Naive thymus-derived CD4-positive, alpha-beta T cell (primary cell): ENCODE measurements at regions of chr1 and their contacts with region 1.

Region 1: DNA sequence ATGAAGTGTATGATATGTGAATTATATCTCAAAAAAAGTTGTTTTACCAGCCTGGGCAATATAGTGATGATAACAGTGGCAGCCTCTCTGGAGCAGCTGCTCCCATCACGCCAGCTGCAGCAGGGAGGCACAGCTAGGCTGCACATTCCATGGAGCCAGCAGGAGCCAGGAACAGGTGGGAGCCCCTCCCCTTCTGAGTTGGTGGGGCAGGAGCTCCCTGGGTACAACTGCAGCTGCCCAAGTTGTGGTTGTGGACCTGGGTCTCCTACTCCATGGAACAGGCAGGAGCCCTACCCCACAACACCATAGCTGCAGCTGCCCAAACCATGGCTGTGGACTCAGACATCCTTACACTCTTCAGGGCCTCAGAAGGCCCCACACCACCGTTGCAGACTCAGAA is 21.7 kb upstream of the FNBP1L start:
- DNase-seq: no peak
- ATAC-seq: no peak
- H3K4me3 ChIP-seq: no peak overlapping the region
- H3K4me3 Mint-ChIP-seq: no peak overlapping the region
- H3K27ac ChIP-seq: no peak overlapping the region
- H3K27ac Mint-ChIP-seq: no peak overlapping the region
- H3K4me1 ChIP-seq: no peaks in the 10 kb centered on the region
- H3K4me1 Mint-ChIP-seq: no peaks in the 10 kb centered on the region
- H3K27me3 ChIP-seq: no peaks in the 10 kb centered on the region
- H3K27me3 Mint-ChIP-seq: peaks cover 0 to 23% (median 6%) of the 10 kb centered on the region in 5 donors

Region 2: GRCh38 chr1:93358293-93358692 is 67.9 kb before region 1 on chr1:
- CTCF ChIA-PET with region 1: no interaction called
- POLR2A ChIA-PET with region 1: no interaction called
- intact Hi-C with region 1: loop called in 1 of 2 experiments (anchors 5 kb)
- DNase-seq: no peak
- ATAC-seq: no peak
- H3K4me3 ChIP-seq: no peak overlapping the region
- H3K4me3 Mint-ChIP-seq: peak overlapping the region in 4 of 10 donors; percentile 0 to 42 (median 33)
- H3K27ac ChIP-seq: no peak overlapping the region
- H3K27ac Mint-ChIP-seq: peak overlapping the region in 8 of 9 donors; percentile 2 to 72 (median 50)
- H3K4me1 ChIP-seq: peaks cover 14 to 29% of the 10 kb centered on the region in 2 donors
- H3K4me1 Mint-ChIP-seq: peaks cover 37 to 85% (median 76%) of the 10 kb centered on the region in 7 donors
- H3K27me3 ChIP-seq: no peaks in the 10 kb centered on the region
- H3K27me3 Mint-ChIP-seq: no peaks in the 10 kb centered on the region